Natural killer cell (primary cell): ENCODE measurements at regions of chr19 and their contacts with region 1.

Region 1: GRCh38 chr19:49877020-49877878 is at the starts of genes AKT1S1 and TBC1D17:
- DNase-seq: peak; percentile 93 to 100
- ATAC-seq: peak; percentile 64 to 87 (median 68)
- H3K4me3 ChIP-seq: peak within 1 kb of the TSS; percentile 57
- H3K4me3 Mint-ChIP-seq: no peak within 1 kb of the TSS
- H3K27ac ChIP-seq: peak within 1 kb of the TSS; percentile 99
- H3K27ac Mint-ChIP-seq: no peak within 1 kb of the TSS
- H3K4me1 ChIP-seq: peaks cover 22% of the 10 kb centered on the region
- H3K4me1 Mint-ChIP-seq: peaks cover 22 to 26% of the 10 kb centered on the region in 2 donors
- H3K27me3 ChIP-seq: no peaks in the 10 kb centered on the region
- H3K27me3 Mint-ChIP-seq: no peaks in the 10 kb centered on the region
- CTCF ChIP-seq: no peak
- total RNA-seq, gene AKT1S1: 12.8 to 17.8 (median 16.1) TPM
- total RNA-seq, gene TBC1D17: 45.8 to 59.7 (median 54.4) TPM

Region 2: DNA sequence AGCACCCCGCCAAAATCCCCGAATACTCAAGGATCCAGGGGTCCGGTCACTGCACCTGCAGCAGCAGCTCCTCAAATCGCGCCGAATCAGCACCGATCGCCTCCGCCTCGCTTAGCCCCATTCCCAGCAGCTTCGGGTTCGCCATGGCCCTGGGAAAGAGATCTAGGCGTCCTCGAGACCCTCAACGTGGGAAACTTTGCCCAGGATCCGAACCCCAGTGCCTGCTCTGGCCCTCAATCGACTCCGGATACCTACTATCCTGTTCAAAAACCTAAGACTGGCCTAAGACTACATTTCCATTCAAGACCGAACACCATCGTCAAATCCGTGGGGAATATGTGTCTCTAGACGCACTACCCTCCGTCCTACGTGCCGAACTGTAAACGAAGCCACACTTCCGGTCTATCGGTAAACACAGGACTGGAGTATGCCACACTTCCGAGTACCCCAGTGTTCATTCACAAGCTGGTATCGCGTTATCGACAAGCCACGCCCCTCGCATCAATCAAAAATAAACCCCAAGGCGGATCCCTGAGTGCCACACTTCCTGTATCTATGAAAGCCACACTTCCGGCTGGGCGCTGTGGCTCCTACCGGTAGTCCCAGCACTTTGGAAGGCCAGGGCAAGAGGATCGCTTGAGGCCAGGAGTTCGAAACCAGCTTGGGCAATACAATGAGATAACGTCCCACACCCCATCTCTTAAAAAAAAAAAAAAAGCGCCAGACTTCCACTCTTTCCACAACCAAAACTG is 425.6 kb before region 1 on chr19 and contains the start of gene PIH1D1:
- intact Hi-C with region 1: loop called (anchors 1 kb)
- DNase-seq: peak; percentile 89 to 99
- ATAC-seq: peak; percentile 66 to 77 (median 70)
- H3K4me3 ChIP-seq: peak within 1 kb of the TSS; percentile 95
- H3K4me3 Mint-ChIP-seq: peak within 1 kb of the TSS; percentile 99
- H3K27ac ChIP-seq: peak within 1 kb of the TSS; percentile 99
- H3K27ac Mint-ChIP-seq: peak within 1 kb of the TSS; percentile 98 to 100
- H3K4me1 ChIP-seq: peaks cover 40% of the 10 kb centered on the region
- H3K4me1 Mint-ChIP-seq: peaks cover 44 to 47% of the 10 kb centered on the region in 2 donors
- H3K27me3 ChIP-seq: no peaks in the 10 kb centered on the region
- H3K27me3 Mint-ChIP-seq: no peaks in the 10 kb centered on the region
- CTCF ChIP-seq: no peak
- total RNA-seq, gene PIH1D1: 112 to 149 (median 138) TPM

Region 3: GRCh38 chr19:49497047-49497788 is 380.0 kb before region 1 on chr19:
- intact Hi-C with region 1: loop called (anchors 1 kb)
- DNase-seq: peak; percentile 43 to 91
- ATAC-seq: no peak
- H3K4me3 ChIP-seq: peak overlapping the region; percentile 62
- H3K4me3 Mint-ChIP-seq: peak overlapping the region; percentile 99
- H3K27ac ChIP-seq: peak overlapping the region; percentile 83
- H3K27ac Mint-ChIP-seq: peak overlapping the region; percentile 97 to 98
- H3K4me1 ChIP-seq: peaks cover 83% of the 10 kb centered on the region
- H3K4me1 Mint-ChIP-seq: peaks cover 55 to 69% of the 10 kb centered on the region in 2 donors
- H3K27me3 ChIP-seq: no peaks in the 10 kb centered on the region
- H3K27me3 Mint-ChIP-seq: no peaks in the 10 kb centered on the region
- CTCF ChIP-seq: no peak

Region 4: DNA sequence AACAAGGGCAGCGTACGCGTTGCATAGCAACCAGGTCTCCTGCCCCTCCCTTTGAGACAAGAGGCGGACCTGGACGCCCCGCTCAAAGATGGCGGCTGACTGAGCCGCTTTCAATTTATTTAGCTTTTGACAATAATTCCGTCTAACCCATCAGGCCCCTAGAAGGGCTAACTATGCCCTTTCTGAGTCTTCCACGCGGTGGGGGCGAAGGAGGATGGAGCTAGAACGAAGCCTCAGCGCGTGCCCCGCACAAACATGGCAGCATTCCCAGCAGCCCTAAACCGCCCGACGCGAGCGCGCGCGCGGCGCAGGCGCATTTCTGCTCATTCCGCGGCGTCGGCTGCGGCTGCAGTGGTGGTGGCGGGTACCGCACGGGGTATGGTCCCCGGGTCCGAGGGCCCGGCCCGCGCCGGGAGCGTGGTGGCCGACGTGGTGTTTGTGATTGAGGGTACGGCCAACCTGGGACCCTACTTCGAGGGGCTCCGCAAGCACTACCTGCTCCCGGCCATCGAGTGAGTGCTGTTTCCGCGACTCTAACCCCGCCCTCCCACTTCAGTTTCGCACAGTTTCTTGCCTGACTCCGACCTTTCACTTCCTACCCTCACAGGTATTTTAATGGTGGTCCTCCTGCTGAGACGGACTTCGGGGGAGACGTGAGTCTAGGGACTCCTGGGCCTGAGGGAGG is 59.1 kb before region 1 on chr19 and contains the start of gene MED25:
- intact Hi-C with region 1: loop called (anchors 1 kb)
- DNase-seq: peak; percentile 91 to 95
- ATAC-seq: peak; percentile 52 to 74 (median 62)
- H3K4me3 ChIP-seq: peak within 1 kb of the TSS; percentile 98
- H3K4me3 Mint-ChIP-seq: peak within 1 kb of the TSS; percentile 98
- H3K27ac ChIP-seq: peak within 1 kb of the TSS; percentile 99
- H3K27ac Mint-ChIP-seq: peak within 1 kb of the TSS; percentile 98
- H3K4me1 ChIP-seq: peaks cover 24% of the 10 kb centered on the region
- H3K4me1 Mint-ChIP-seq: peaks cover 21 to 38% of the 10 kb centered on the region in 2 donors
- H3K27me3 ChIP-seq: no peaks in the 10 kb centered on the region
- H3K27me3 Mint-ChIP-seq: no peaks in the 10 kb centered on the region
- CTCF ChIP-seq: peak; percentile 14
- total RNA-seq, gene MED25: 64.2 to 132 (median 69.5) TPM

Region 5: GRCh38 chr19:49929611-49930482 is 52.6 kb after region 1 on chr19:
- intact Hi-C with region 1: loop called (anchors 2 kb)
- DNase-seq: peak; percentile 88 to 98
- ATAC-seq: peak; percentile 83 to 95 (median 86)
- H3K4me3 ChIP-seq: peak overlapping the region; percentile 97
- H3K4me3 Mint-ChIP-seq: peak overlapping the region; percentile 99
- H3K27ac ChIP-seq: peak overlapping the region; percentile 91
- H3K27ac Mint-ChIP-seq: peak overlapping the region; percentile 97
- H3K4me1 ChIP-seq: peaks cover 61% of the 10 kb centered on the region
- H3K4me1 Mint-ChIP-seq: peaks cover 61 to 68% of the 10 kb centered on the region in 2 donors
- H3K27me3 ChIP-seq: no peaks in the 10 kb centered on the region
- H3K27me3 Mint-ChIP-seq: no peaks in the 10 kb centered on the region
- CTCF ChIP-seq: no peak

Region 6: DNA sequence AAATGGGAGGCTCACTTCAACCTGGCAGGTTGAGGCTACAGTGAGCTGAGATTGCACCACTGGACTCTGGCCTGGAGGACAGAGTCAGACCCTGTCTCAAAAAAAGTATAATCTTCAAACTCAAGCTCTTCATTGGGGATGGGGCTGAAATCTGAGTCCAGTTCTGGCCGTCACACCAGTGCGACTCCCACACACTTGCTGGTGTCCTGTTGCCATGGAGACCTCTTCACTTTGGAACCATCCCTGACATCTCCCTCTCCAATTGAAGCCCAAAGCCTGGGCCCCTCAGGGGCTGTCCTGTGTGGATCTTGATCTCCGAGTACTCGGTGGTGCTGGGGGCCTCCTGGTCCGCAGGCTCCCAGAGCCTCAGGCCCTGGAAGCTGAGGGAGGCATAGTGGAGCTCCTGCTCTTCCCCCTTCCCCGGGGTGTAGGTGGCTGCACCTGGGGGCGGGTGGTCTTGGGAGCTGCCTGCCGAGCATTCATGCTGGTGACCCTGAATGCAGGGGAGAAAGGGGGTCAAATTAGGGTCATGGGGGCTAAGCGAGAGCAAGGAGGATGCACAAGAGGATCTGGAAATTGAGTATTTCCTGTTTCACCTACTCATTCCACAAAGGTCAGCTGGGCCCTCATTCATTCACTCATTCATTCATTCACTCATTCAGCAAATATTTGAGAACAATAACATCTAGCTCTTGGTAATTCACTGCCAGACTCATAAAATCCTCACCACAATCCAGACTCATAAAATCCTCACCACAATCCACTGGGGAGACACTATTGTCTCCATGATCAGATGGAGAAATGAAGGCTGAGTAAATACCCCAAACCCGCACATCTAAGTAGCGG is 72.7 kb after region 1 on chr19:
- intact Hi-C with region 1: no loop called
- DNase-seq: no peak
- ATAC-seq: no peak
- H3K4me3 ChIP-seq: no peak overlapping the region
- H3K4me3 Mint-ChIP-seq: no peak overlapping the region
- H3K27ac ChIP-seq: no peak overlapping the region
- H3K27ac Mint-ChIP-seq: no peak overlapping the region
- H3K4me1 ChIP-seq: no peaks in the 10 kb centered on the region
- H3K4me1 Mint-ChIP-seq: peaks cover 9 to 12% of the 10 kb centered on the region in 2 donors
- H3K27me3 ChIP-seq: no peaks in the 10 kb centered on the region
- H3K27me3 Mint-ChIP-seq: peaks cover 28 to 30% of the 10 kb centered on the region in 2 donors
- CTCF ChIP-seq: no peak

Region 7: GRCh38 chr19:50061650-50062049 is 184.4 kb after region 1 on chr19:
- intact Hi-C with region 1: no loop called
- DNase-seq: no peak
- ATAC-seq: no peak
- H3K4me3 ChIP-seq: no peak overlapping the region
- H3K4me3 Mint-ChIP-seq: no peak overlapping the region
- H3K27ac ChIP-seq: no peak overlapping the region
- H3K27ac Mint-ChIP-seq: no peak overlapping the region
- H3K4me1 ChIP-seq: no peaks in the 10 kb centered on the region
- H3K4me1 Mint-ChIP-seq: no peaks in the 10 kb centered on the region
- H3K27me3 ChIP-seq: no peaks in the 10 kb centered on the region
- H3K27me3 Mint-ChIP-seq: peaks cover 0 to 7% of the 10 kb centered on the region in 2 donors
- CTCF ChIP-seq: no peak